ENCODE measurements at regions of chr4 and their contacts with region 1.

Region 1: GRCh38 chr4:77358315-77358928 is 201.4 kb downstream of the CCNG2 start:
- DNase-seq: no peak
- H3K4me3 ChIP-seq: no peak overlapping the region
- H3K27ac ChIP-seq: no peak overlapping the region
- H3K4me1 ChIP-seq: peaks cover 0 to 2% (median 0%) of the 10 kb centered on the region in 4 experiments; a peak in 1 of 7 replicates
- H3K27me3 ChIP-seq: no peaks in the 10 kb centered on the region
- CTCF ChIP-seq: peak; percentile 24 to 75 (median 72)
- EP300 ChIP-seq: no peak
- POLR2A ChIP-seq: no peak
- RAD21 ChIP-seq: peak; percentile 62 to 74

Region 2: GRCh38 chr4:77240469-77241066 is 117.9 kb before region 1 on chr4:
- CTCF ChIA-PET with region 1: interaction called, 228 read pairs
- POLR2A ChIA-PET with region 1: no interaction called
- DNase-seq: peak; percentile 65 to 93
- H3K4me3 ChIP-seq: no peak overlapping the region
- H3K27ac ChIP-seq: no peak overlapping the region
- H3K4me1 ChIP-seq: no peaks in the 10 kb centered on the region
- H3K27me3 ChIP-seq: no peaks in the 10 kb centered on the region
- CTCF ChIP-seq: peak; percentile 95 to 97 (median 97)
- EP300 ChIP-seq: no peak
- POLR2A ChIP-seq: no peak
- RAD21 ChIP-seq: peak; percentile 97 to 98

Region 3: DNA sequence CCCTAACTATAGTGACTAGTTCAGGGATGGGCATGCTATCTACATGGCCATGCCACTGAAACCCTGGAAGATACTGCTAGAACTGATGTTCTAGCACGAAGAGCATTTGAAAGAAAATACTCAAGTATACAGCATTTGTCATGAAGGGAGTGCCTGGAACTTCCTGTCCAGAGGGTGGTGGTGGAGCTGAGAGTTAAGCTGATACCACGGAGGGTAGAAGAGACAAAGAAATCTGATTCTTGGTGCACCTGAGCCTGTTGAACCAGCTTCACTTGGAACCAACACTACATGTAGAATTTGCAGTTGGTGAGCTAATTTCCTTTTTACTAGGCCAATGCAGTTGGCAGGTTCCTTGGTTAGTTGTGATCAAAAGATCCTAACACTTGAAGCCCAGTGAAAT is 85.0 kb before region 1 on chr4:
- CTCF ChIA-PET with region 1: interaction called, 12 read pairs
- POLR2A ChIA-PET with region 1: no interaction called
- DNase-seq: no peak
- H3K4me3 ChIP-seq: no peak overlapping the region
- H3K27ac ChIP-seq: no peak overlapping the region
- H3K4me1 ChIP-seq: no peaks in the 10 kb centered on the region
- H3K27me3 ChIP-seq: no peaks in the 10 kb centered on the region
- CTCF ChIP-seq: no peak
- EP300 ChIP-seq: no peak
- POLR2A ChIP-seq: no peak
- RAD21 ChIP-seq: no peak

Region 4: DNA sequence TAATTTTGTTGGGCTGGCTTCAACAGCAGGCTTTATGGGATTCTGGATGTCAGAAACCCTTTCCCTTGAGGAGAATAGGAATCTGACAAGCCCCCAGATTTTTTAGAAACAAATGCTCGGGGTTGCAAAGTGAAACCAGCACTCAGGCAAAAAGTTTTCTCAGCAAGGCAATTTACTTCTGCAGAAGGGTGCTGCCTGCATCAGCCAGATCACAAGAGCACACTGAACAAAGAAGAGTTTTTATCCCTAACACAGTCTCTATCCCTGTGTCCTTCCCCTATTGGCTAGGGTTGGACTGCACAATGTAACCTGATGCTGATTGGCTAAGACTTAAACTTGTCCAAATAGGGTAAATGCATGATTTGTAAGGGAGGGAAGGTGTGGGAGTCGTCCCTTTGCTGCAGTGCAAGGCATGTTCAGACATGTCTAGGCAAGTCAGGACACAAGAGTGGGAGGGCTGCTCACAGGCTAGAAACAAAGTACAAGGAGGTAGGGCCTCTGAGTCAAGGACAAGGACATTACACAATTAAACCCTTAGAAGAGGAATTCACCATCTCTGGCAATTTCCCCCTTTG is 25.6 kb before region 1 on chr4:
- CTCF ChIA-PET with region 1: interaction called, 16 read pairs
- POLR2A ChIA-PET with region 1: no interaction called
- DNase-seq: no peak
- H3K4me3 ChIP-seq: no peak overlapping the region
- H3K27ac ChIP-seq: no peak overlapping the region
- H3K4me1 ChIP-seq: peaks cover 0 to 4% (median 0%) of the 10 kb centered on the region in 4 experiments; a peak in 1 of 7 replicates
- H3K27me3 ChIP-seq: no peaks in the 10 kb centered on the region
- CTCF ChIP-seq: no peak
- EP300 ChIP-seq: no peak
- POLR2A ChIP-seq: no peak
- RAD21 ChIP-seq: no peak

Region 5: DNA sequence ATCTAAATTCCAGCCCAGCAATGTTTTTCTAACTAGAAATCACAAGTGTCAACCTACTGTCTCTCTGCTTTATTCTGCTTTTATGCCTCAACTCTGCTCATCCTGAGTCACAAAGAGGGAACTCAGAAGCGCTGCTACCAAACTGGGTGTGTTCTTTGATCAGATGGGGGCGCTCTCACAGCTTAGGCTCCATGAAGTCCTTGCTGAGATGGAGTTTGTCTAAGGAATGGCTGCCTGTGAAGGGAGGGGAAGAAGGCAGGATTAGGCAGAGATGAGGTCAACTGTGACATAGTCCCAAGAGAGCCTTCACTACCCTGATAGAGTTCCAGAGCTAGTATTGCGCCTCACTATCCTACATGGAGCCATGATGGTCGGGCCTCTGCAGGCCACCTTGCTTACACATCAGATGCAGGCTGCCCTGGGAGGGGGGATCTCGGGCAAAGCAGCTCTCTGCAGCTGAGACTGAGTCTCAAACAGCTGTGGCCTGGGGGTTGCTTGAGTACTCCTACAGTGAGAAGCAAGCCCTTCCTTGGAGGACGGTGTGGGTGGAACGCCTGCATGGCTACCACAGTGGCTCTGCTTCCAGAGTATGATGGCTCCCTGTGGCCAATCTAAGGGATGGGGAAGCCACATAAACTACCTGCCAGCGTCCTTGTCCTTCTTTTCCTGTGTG is 18.5 kb after region 1 on chr4:
- CTCF ChIA-PET with region 1: interaction called, 95 read pairs
- POLR2A ChIA-PET with region 1: no interaction called
- DNase-seq: no peak
- H3K4me3 ChIP-seq: no peak overlapping the region
- H3K27ac ChIP-seq: no peak overlapping the region
- H3K4me1 ChIP-seq: peaks cover 0 to 5% (median 2%) of the 10 kb centered on the region in 4 experiments; a peak in 3 of 7 replicates
- H3K27me3 ChIP-seq: no peaks in the 10 kb centered on the region
- CTCF ChIP-seq: peak; percentile 31 to 69 (median 45)
- EP300 ChIP-seq: no peak
- POLR2A ChIP-seq: no peak
- RAD21 ChIP-seq: peak in 1 of 2 experiments; percentile 31; a peak in 1 of 4 replicates

Region 6: GRCh38 chr4:77433418-77433733 is 75.0 kb after region 1 on chr4:
- CTCF ChIA-PET with region 1: interaction called, 1,551 read pairs
- POLR2A ChIA-PET with region 1: no interaction called
- DNase-seq: no peak
- H3K4me3 ChIP-seq: no peak overlapping the region
- H3K27ac ChIP-seq: no peak overlapping the region
- H3K4me1 ChIP-seq: peaks cover 0 to 3% (median 0%) of the 10 kb centered on the region in 4 experiments; a peak in 1 of 7 replicates
- H3K27me3 ChIP-seq: no peaks in the 10 kb centered on the region; a peak in 1 of 7 replicates
- CTCF ChIP-seq: peak in 2 of 3 experiments; percentile 64 to 87; a peak in 3 of 4 replicates
- EP300 ChIP-seq: no peak
- POLR2A ChIP-seq: no peak
- RAD21 ChIP-seq: peak; percentile 79 to 89

Measured in H1 (cell line).